ENCODE measurements at regions of chr1 and their contacts with region 1.

Region 1: DNA sequence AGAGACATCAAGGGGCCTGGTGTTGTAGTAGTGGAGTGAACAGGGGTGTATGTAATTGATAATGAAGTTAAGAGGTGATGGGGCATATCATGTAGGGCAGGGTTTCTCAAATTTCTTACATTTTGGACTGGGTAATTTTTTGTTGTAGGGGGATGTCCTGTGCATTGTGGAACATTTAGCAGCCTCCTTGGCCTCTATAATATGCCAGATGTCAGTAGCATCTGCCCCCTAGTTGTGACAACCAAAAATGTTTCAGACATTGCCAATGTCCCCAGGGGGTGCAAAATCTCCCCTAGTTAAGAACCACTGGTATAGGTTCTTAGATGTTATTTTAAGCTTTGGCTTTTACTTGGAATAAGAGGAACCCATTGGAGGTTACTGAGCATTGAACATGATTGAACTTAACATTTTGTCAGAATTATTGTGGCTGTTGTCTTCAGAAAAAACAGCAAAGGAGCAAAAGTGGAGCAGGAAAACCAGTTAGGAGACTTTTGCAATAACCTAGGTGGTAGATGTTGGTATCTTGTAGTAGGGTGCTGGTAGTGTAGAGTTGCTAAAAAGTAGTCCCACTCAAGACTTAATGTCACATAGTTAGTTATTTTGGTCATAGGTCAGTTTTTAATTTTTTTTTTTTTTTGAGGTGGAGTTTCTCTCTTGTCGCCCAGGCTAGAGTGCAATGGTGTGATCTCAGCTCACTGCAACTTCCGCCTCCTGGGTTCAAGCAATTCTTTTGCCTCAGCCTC is 6.2 kb downstream of the ZNF326 start:
- DNase-seq: no peak
- H3K4me3 ChIP-seq: no peak overlapping the region
- H3K27me3 ChIP-seq: no peaks in the 10 kb centered on the region
- CTCF ChIP-seq: no peak

Region 2: DNA sequence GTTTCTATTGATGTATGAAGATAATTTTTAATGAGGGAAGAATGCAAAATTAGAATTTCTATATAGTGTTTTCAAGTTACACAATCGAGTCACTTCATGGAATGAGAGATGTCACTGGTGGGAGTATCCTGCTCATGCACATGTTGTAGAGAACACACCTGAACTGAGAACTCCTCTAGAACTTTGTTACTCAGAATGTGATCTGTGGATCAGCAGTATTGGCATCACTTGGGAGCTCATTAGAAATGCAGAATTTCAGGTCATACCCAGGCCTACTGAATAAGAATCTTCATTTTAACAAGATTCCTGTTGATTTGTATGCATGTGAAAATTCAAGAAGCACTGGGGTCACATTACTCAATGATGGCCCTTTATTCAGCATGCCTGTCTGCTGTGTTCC is 22.6 kb after region 1 on chr1:
- CTCF ChIA-PET with region 1: no interaction called
- POLR2A ChIA-PET with region 1: interaction called, 10 read pairs
- DNase-seq: no peak
- H3K4me3 ChIP-seq: no peak overlapping the region
- H3K27me3 ChIP-seq: no peaks in the 10 kb centered on the region
- CTCF ChIP-seq: no peak

Measured in BJ (cell line).